Panc1 (cell line): ENCODE measurements at regions of chr10 and their contacts with region 1.

Region 1: DNA sequence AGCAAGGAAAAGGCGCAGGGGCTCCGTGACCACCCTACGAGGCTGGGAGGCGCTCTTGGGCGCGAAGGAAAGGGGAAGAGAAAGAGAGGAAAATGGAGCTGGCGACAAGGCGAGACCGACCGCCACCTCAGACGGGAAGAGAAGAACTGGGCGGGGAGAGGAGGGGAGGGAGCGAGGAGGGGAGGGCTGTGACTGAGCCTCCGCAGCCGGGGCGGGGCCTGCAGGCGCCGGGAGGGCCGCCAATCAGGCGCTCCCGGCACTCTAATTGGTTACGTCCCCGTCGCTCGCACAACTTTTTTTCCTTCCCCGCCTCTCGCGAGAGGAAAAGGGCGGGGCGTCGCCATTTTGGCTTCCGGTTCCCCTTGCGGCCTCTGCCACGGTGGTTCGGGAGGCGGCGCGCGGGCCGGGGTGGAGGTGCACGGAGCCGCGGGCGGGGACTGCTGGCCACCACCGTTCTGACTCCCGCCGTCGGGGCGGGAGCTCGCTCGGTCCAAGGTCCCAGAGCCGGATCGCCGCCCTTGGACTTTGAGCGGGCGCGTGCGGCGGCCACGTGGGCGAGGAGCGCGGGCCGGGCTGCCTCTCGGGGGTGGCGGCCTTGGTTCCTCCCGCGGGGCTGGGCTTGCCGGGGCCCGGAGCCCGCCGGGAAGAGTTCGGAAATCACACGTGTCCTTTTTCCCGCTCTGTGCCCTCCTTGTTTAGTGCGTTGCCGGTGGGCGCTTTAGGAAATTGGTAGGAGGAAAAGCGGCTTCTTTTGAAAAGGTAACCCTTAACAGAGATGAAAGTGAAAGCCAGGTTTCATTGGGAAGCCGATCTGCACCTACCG is at the start of gene GDI2:
- DNase-seq: peak; percentile 62
- ATAC-seq: peak; percentile 98
- H3K4me3 ChIP-seq: peak within 1 kb of the TSS; percentile 64 to 90
- H3K27ac ChIP-seq: peak within 1 kb of the TSS; percentile 76
- H3K4me1 ChIP-seq: peaks cover 15% of the 10 kb centered on the region; the same call in 1 of the 2 replicates
- H3K27me3 ChIP-seq: no peaks in the 10 kb centered on the region
- CTCF ChIP-seq: no peak
- total RNA-seq, gene GDI2: 130 TPM

Region 2: GRCh38 chr10:5460468-5461202 is 352.9 kb before region 1 on chr10:
- CTCF ChIA-PET with region 1: no interaction called
- POLR2A ChIA-PET with region 1: interaction called, 22 read pairs
- in situ Hi-C with region 1: no loop called
- intact Hi-C with region 1: no loop called
- DNase-seq: no peak
- ATAC-seq: no peak
- H3K4me3 ChIP-seq: no peak overlapping the region
- H3K27ac ChIP-seq: no peak overlapping the region
- H3K4me1 ChIP-seq: no peaks in the 10 kb centered on the region
- H3K27me3 ChIP-seq: no peaks in the 10 kb centered on the region
- CTCF ChIP-seq: no peak

Region 3: DNA sequence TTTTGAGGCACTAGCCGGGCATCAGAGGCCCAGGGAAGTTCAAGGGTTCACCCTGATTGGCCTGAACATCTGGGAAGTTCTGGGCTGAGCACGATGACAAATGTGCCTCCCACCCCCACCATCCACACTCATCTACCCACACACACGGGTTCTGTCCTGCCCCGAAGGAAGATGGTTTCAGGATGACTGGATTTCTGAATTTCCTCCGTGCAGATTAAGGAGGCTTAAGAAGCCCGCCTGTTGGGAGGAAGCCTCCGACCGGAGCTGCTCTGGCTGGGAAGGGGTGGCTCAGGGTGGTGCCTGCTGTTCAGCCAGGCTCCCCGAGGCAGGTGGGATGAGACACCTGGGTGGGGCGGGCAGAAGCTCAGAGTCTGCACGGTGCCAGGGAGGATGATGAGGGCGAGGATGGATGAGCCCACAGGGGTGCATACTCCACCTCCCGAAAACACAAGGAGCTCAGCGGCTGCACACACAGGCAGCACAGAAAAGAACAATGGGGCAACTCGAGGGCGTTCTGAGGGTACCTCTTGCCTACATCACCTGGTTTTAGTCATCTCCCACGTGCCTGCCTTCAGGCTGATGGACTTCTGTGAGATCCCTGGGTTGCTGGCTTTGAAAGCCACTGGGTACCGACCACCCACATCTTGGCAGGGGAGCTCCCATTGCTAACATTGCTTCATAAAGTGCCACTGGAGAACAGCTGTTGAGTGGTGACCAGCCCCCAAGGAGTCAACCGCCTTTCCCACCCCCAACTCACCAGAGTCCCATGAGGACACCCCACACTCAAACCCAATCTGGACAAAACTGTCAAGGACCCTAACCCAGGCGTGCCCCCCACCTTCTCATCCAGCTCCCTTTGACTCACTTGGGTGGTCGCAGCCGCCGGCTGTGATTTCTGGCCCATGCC is 247.6 kb before region 1 on chr10:
- CTCF ChIA-PET with region 1: no interaction called
- POLR2A ChIA-PET with region 1: no interaction called
- in situ Hi-C with region 1: no loop called
- intact Hi-C with region 1: no loop called
- DNase-seq: no peak
- ATAC-seq: no peak
- H3K4me3 ChIP-seq: no peak overlapping the region
- H3K27ac ChIP-seq: no peak overlapping the region
- H3K4me1 ChIP-seq: no peaks in the 10 kb centered on the region
- H3K27me3 ChIP-seq: no peaks in the 10 kb centered on the region
- CTCF ChIP-seq: no peak

Region 4: DNA sequence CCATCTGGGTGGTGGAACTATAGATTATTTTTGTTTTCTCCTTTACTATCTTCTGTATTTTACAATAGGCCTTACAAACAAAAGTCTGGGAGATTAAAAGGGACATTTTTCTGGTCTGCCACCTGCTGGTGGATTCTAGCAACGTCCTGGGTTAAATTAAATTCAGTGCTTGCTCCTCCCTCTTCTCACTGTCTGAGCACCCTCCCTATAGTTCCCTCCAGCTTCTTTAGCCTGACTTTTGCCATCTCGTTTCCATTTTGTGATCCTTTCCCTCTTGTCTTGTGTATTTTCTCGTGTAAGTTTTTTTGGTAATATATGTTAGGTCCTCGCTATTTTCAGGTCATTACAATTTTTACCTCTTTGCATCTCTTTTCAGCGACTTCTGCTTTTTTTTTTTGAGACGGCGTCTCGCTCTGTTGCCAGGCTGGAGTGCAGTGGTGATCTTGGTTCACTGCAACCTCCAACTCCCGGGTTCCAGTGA is 60.1 kb after region 1 on chr10:
- CTCF ChIA-PET with region 1: interaction called, 6 read pairs
- POLR2A ChIA-PET with region 1: interaction called, 4 read pairs
- in situ Hi-C with region 1: no loop called
- intact Hi-C with region 1: loop called (anchors 5 kb)
- DNase-seq: peak; percentile 48
- ATAC-seq: peak; percentile 88
- H3K4me3 ChIP-seq: no peak overlapping the region
- H3K27ac ChIP-seq: no peak overlapping the region
- H3K4me1 ChIP-seq: no peaks in the 10 kb centered on the region
- H3K27me3 ChIP-seq: no peaks in the 10 kb centered on the region
- CTCF ChIP-seq: peak; percentile 76